A673 (cell line): ENCODE measurements at regions of chr2 and their contacts with region 1.

Region 1: GRCh38 chr2:169900686-169901085 is 73.4 kb downstream of the UBR3 start:
- DNase-seq: no peak
- H3K4me3 ChIP-seq: no peak overlapping the region
- H3K27ac ChIP-seq: no peak overlapping the region
- H3K4me1 ChIP-seq: no peaks in the 10 kb centered on the region
- H3K27me3 ChIP-seq: no peaks in the 10 kb centered on the region
- CTCF ChIP-seq: no peak

Region 2: GRCh38 chr2:169859423-169859822 is 41.3 kb before region 1 on chr2:
- CTCF ChIA-PET with region 1: interaction called, 11 read pairs
- POLR2A ChIA-PET with region 1: no interaction called
- intact Hi-C with region 1: no loop called
- DNase-seq: no peak
- H3K4me3 ChIP-seq: no peak overlapping the region
- H3K27ac ChIP-seq: no peak overlapping the region
- H3K4me1 ChIP-seq: no peaks in the 10 kb centered on the region
- H3K27me3 ChIP-seq: no peaks in the 10 kb centered on the region
- CTCF ChIP-seq: no peak

Region 3: DNA sequence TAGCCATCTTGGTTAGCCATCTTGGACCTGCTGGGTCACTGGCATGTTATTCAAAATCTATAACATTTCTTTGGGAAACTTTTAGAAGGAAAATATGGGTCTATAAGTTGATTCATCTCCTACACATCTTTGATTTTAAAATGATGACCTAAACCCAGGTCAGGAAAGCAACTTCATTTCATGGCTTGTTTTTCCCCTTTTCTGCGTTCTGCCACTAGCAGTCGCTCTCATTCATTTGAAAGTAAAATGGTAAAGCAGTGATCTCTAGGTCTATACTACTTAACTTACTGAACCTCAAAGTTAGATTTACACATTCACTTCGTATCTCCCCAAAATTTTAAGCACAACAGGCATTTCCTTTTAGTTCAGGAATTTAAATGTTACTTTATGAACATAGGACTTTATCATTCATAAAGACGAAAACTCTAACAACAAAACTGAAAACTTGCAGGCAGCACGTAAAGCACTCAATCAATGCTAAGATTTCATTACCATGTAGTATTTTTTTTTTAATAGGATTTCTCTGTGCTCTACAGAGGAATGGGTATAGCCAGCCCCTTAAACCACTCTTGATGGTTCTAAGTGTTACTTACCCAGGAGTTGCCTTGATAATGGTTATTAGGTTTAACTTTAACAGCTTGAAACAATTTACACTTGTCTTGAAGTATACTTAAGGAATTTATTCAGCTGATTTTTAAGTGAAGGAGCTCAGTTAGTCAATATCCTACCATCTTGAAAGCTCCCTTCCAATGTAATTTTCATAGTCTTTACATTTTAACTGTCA is 1090.9 kb after region 1 on chr2:
- CTCF ChIA-PET with region 1: no interaction called
- POLR2A ChIA-PET with region 1: no interaction called
- intact Hi-C with region 1: no loop called
- DNase-seq: no peak
- H3K4me3 ChIP-seq: no peak overlapping the region
- H3K27ac ChIP-seq: no peak overlapping the region
- H3K4me1 ChIP-seq: no peaks in the 10 kb centered on the region
- H3K27me3 ChIP-seq: no peaks in the 10 kb centered on the region
- CTCF ChIP-seq: peak; percentile 23; the same call in 1 of the 2 replicates